Activated naive CD4-positive, alpha-beta T cell treated with anti-CD3 and anti-CD28 coated beads for 36 hours (primary cell): ENCODE measurements at regions of chr9 and their contacts with region 1.

Region 1: DNA sequence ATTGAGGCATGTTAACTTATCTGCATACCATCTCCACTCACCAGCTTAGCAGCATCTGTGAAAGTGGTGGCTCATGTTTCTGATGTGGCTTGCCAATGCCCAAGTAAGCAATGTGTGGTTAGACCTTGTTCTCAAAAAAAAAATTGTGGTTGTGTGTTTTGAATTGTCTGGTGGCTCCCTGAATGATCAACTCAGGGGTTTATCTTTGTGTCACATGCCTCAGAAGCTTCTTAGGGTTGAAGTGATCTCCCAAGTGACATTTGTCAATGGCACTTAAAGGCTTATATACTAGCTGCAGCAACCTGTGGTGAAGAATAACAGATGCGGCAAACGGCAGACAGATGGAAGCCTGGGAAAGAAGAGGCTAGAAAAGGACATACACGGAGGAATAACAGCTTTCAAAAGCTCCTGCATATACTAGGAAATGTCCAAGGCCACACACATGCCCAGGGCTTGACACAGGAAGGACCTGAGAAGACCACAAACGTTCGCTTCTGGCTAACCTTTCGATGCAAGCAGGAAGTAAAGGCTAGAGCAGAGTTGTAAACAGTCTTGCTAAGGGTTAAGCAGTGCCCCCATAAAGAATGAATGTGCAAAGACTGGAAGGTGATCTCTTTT is 42.2 kb upstream of the FSD1L start:
- DNase-seq: peak; percentile 69
- H3K4me3 Mint-ChIP-seq: no peak overlapping the region
- H3K27ac Mint-ChIP-seq: peak overlapping the region; percentile 6
- H3K4me1 Mint-ChIP-seq: peaks cover 26% of the 10 kb centered on the region
- H3K27me3 Mint-ChIP-seq: peaks cover 50% of the 10 kb centered on the region

Region 2: GRCh38 chr9:104765138-104765537 is 640.5 kb before region 1 on chr9:
- CTCF ChIA-PET with region 1: no interaction called
- intact Hi-C with region 1: loop called (anchors 5 kb)
- DNase-seq: no peak
- H3K4me3 Mint-ChIP-seq: peak overlapping the region; percentile 82
- H3K27ac Mint-ChIP-seq: no peak overlapping the region
- H3K4me1 Mint-ChIP-seq: peaks cover 6% of the 10 kb centered on the region
- H3K27me3 Mint-ChIP-seq: no peaks in the 10 kb centered on the region

Region 3: GRCh38 chr9:104984121-104984520 is 421.5 kb before region 1 on chr9:
- CTCF ChIA-PET with region 1: no interaction called
- intact Hi-C with region 1: loop called (anchors 1 kb)
- DNase-seq: no peak
- H3K4me3 Mint-ChIP-seq: no peak overlapping the region
- H3K27ac Mint-ChIP-seq: peak overlapping the region; percentile 94
- H3K4me1 Mint-ChIP-seq: peaks cover 70% of the 10 kb centered on the region
- H3K27me3 Mint-ChIP-seq: peaks cover 8% of the 10 kb centered on the region

Region 4: DNA sequence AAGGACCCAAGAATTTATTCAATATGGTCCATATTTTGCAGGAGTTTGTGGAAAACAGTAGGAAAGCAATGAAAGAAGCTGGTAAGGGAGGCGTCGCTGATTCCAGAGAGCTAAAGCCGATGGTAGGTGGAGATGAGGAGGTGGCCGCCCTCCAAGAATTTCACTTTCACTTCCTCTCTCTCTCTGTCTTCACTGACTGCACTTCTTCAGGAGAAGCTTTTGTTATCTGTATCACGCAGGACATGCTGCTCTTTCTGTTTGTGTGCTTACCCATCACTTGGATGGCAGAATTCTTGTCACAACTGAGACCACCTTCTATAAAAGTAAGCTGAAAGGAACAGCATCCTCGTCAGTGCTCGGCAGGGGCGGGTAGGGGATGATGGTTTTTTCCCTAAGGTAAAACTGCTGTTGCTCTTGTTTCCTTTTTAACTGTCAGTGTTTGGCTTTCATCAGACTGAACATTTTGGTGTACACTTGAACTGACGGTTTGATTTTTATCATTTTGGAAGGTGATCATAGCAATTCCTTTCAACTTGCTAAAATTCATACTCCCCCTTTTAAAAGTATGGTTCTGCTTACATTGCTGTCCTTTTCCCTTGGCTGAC is 20.1 kb before region 1 on chr9:
- CTCF ChIA-PET with region 1: interaction called, 3 read pairs
- intact Hi-C with region 1: loop called (anchors 1 kb)
- DNase-seq: peak; percentile 50
- H3K4me3 Mint-ChIP-seq: peak overlapping the region; percentile 78
- H3K27ac Mint-ChIP-seq: no peak overlapping the region
- H3K4me1 Mint-ChIP-seq: peaks cover 12% of the 10 kb centered on the region
- H3K27me3 Mint-ChIP-seq: no peaks in the 10 kb centered on the region